Endothelial cell of umbilical vein (primary cell): ENCODE measurements at regions of chr11 and their contacts with region 1.

Region 1: DNA sequence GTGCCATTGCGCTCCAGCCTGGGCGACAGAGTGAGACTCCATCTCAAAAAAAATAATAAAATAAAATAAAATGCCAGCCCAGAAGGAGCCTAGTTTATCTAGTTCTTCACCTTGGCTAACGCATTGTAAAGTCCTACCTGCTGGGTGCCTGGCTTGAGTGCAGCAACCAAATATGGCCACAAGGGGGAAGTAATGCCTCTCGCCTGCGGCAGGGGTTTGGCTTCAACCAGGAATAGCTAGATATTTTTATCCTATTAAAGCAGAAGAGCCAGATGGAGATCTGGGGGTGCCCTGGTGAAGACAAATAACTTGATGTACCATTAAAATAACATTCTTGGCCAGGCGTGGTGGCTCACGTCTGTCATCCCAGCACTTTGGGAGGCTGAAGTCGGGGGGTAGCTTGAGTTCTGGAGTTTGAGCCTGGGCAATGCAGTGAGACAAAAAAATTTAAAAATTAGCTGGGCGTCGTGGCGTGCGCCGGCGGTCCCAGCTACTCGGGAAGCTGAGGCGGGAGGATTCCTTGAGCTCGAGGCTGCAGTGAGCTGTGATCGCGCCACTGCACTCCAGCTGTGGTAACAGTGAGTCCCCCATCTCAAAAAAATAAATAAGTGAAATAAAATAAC is 20.6 kb upstream of the PLEKHB1 start:
- DNase-seq: peak; percentile 74
- H3K4me3 ChIP-seq: no peak overlapping the region
- H3K27ac ChIP-seq: no peak overlapping the region
- H3K4me1 ChIP-seq: no peaks in the 10 kb centered on the region
- H3K27me3 ChIP-seq: peaks cover 9 to 12% of the 10 kb centered on the region in 2 experiments
- CTCF ChIP-seq: peak; percentile 84 to 85
- POLR2A ChIP-seq: no peak

Region 2: DNA sequence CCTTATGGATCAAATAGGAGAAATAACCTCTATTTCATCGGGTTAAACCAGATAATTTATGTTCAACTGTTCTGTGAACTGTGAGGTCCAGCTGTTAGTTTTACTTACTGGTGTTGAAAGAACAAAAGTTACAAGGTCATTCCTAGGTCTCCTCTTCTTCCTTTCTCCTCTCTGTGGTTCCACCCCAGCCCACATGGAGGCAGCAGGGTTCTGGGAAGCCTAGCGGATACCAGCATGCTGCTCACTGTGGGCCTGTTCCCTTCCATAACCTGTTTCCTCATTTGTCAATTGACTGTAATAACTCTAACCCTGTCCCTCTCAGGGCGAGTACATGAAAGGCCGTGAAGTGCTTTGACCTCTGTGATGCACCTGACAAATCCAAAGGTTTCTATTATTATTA is 221.8 kb before region 1 on chr11:
- CTCF ChIA-PET with region 1: interaction called, 13 read pairs
- POLR2A ChIA-PET with region 1: no interaction called
- dilution Hi-C with region 1: no loop called
- intact Hi-C with region 1: loop called (anchors 10 kb)
- DNase-seq: peak; percentile 53
- H3K4me3 ChIP-seq: no peak overlapping the region
- H3K27ac ChIP-seq: no peak overlapping the region
- H3K4me1 ChIP-seq: peaks cover 4% of the 10 kb centered on the region
- H3K27me3 ChIP-seq: no peaks in the 10 kb centered on the region
- CTCF ChIP-seq: peak; percentile 44 to 68
- POLR2A ChIP-seq: no peak

Region 3: GRCh38 chr11:73478738-73479347 is 147.0 kb before region 1 on chr11:
- CTCF ChIA-PET with region 1: interaction called, 83 read pairs
- POLR2A ChIA-PET with region 1: no interaction called
- dilution Hi-C with region 1: no loop called
- intact Hi-C with region 1: loop called (anchors 2 kb)
- DNase-seq: peak; percentile 59
- H3K4me3 ChIP-seq: no peak overlapping the region
- H3K27ac ChIP-seq: no peak overlapping the region
- H3K4me1 ChIP-seq: no peaks in the 10 kb centered on the region
- H3K27me3 ChIP-seq: no peaks in the 10 kb centered on the region
- CTCF ChIP-seq: peak; percentile 79 to 87
- POLR2A ChIP-seq: no peak

Region 4: GRCh38 chr11:73570415-73571114 is 55.2 kb before region 1 on chr11:
- CTCF ChIA-PET with region 1: interaction called, 20 read pairs
- POLR2A ChIA-PET with region 1: no interaction called
- dilution Hi-C with region 1: no loop called
- intact Hi-C with region 1: no loop called
- DNase-seq: peak; percentile 17
- H3K4me3 ChIP-seq: no peak overlapping the region
- H3K27ac ChIP-seq: no peak overlapping the region
- H3K4me1 ChIP-seq: peaks cover 20% of the 10 kb centered on the region
- H3K27me3 ChIP-seq: no peaks in the 10 kb centered on the region
- CTCF ChIP-seq: no peak
- POLR2A ChIP-seq: no peak

Region 5: GRCh38 chr11:73612601-73613140 is 13.1 kb before region 1 on chr11:
- CTCF ChIA-PET with region 1: interaction called, 14 read pairs
- POLR2A ChIA-PET with region 1: no interaction called
- dilution Hi-C with region 1: no loop called
- intact Hi-C with region 1: no loop called
- DNase-seq: no peak
- H3K4me3 ChIP-seq: no peak overlapping the region
- H3K27ac ChIP-seq: no peak overlapping the region
- H3K4me1 ChIP-seq: no peaks in the 10 kb centered on the region
- H3K27me3 ChIP-seq: peaks cover 3 to 10% of the 10 kb centered on the region in 2 experiments
- CTCF ChIP-seq: no peak
- POLR2A ChIP-seq: no peak

Region 6: DNA sequence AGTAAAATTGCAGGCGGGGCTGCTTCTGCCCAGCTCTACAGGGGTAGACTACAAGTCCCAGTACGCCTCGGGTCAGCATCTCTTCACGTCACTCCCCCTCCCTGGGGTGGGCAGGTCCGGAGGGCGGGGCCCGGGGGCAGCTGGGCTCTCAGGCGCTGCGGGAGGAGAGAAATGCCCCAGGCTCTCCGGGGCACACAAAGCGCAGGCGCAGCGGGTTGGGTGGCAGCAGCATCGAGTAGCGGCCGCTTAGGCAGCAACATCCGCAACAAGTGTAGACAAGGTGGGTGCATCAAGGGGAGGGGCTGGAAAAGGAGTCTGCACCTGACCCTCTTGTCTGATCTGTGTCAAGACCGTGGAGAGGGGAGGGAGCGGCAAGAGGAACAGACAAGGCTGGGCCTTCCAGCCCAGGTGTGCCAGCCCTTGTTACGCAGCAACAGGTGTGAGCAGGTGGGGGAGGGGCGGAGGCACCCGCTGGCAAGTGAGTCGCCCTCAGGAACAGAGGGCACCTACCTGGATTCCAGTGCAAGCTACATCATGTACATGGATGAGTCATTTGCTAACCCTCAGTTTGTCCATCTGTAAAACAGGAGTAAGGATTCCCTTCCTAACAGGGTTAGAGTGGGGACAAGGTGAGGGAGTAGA is 21.8 kb after region 1 on chr11:
- CTCF ChIA-PET with region 1: interaction called, 34 read pairs
- POLR2A ChIA-PET with region 1: interaction called, 3 read pairs
- dilution Hi-C with region 1: no loop called
- intact Hi-C with region 1: no loop called
- DNase-seq: peak; percentile 84
- H3K4me3 ChIP-seq: no peak overlapping the region
- H3K27ac ChIP-seq: no peak overlapping the region
- H3K4me1 ChIP-seq: no peaks in the 10 kb centered on the region
- H3K27me3 ChIP-seq: peaks cover 11 to 23% of the 10 kb centered on the region in 2 experiments
- CTCF ChIP-seq: no peak
- POLR2A ChIP-seq: no peak

Region 7: GRCh38 chr11:73661035-73661628 is 35.3 kb after region 1 on chr11:
- CTCF ChIA-PET with region 1: interaction called, 243 read pairs
- POLR2A ChIA-PET with region 1: no interaction called
- dilution Hi-C with region 1: no loop called
- intact Hi-C with region 1: loop called (anchors 1 kb)
- DNase-seq: peak; percentile 84
- H3K4me3 ChIP-seq: peak overlapping the region in 2 of 3 experiments; percentile 26 to 32
- H3K27ac ChIP-seq: no peak overlapping the region
- H3K4me1 ChIP-seq: peaks cover 6% of the 10 kb centered on the region
- H3K27me3 ChIP-seq: no peaks in the 10 kb centered on the region
- CTCF ChIP-seq: peak; percentile 96 to 98
- POLR2A ChIP-seq: no peak